ENCODE measurements at regions of chr2 and their contacts with region 1.

Region 1: GRCh38 chr2:64523666-64524603 is at the start of gene AFTPH:
- DNase-seq: peak; percentile 99
- H3K4me3 Mint-ChIP-seq: peak within 1 kb of the TSS; percentile 83
- H3K27ac Mint-ChIP-seq: peak within 1 kb of the TSS; percentile 94
- H3K4me1 Mint-ChIP-seq: peaks cover 8% of the 10 kb centered on the region
- H3K27me3 Mint-ChIP-seq: no peaks in the 10 kb centered on the region
- CTCF ChIP-seq: no peak
- total RNA-seq, gene AFTPH: 24.2 and 24.7 TPM in 2 replicates

Region 2: GRCh38 chr2:64318476-64318748 is 205.5 kb before region 1 on chr2:
- CTCF ChIA-PET with region 1: no interaction called
- POLR2A ChIA-PET with region 1: no interaction called
- intact Hi-C with region 1: no loop called
- DNase-seq: no peak
- H3K4me3 Mint-ChIP-seq: no peak overlapping the region
- H3K27ac Mint-ChIP-seq: no peak overlapping the region
- H3K4me1 Mint-ChIP-seq: no peaks in the 10 kb centered on the region
- H3K27me3 Mint-ChIP-seq: peaks cover 19% of the 10 kb centered on the region
- CTCF ChIP-seq: no peak

Region 3: DNA sequence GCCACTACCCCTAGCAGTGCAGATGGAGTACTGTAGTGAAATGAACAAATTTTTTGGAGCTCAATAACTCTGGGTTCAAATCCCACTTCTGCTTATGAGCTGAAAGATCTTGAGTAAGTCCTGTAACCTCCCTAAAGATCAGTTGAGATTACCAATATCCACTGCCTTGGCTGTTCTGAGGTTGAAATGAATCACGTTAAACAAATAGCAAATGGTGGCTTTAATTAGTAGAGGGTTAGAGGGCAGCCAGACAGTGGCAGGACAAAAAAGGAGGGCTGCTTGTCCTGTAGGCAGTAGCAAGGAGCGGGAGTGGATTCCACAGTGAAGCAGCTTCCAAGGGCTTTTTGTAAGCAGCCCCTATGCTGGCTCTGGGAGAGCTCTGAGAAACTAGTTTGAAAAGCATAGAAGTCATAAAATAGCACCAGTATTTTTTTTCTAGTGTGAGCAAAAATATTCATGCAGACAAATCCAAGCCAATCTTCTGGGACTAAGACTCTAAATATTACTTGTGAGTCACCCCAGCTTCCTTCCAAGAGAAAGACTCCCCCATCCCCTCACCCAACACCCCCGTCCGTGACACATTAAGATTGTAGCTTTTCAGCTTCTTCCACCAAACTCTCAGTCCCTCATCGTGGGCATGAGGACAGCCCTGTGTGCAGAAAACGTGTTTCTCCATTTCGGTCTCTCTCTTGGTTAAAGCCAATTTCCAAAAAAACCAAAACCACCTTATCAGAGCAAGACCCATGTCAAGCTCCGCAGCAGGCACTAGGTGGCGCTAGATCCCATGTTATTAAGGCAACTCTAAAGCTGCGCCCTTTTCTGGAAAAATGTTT is 193.4 kb before region 1 on chr2:
- CTCF ChIA-PET with region 1: interaction called, 17 read pairs
- POLR2A ChIA-PET with region 1: interaction called, 15 read pairs
- intact Hi-C with region 1: no loop called
- DNase-seq: peak; percentile 81
- H3K4me3 Mint-ChIP-seq: peak overlapping the region; percentile 49
- H3K27ac Mint-ChIP-seq: peak overlapping the region; percentile 64
- H3K4me1 Mint-ChIP-seq: peaks cover 6% of the 10 kb centered on the region
- H3K27me3 Mint-ChIP-seq: no peaks in the 10 kb centered on the region
- CTCF ChIP-seq: peak; percentile 94

Region 4: GRCh38 chr2:64504774-64505720 is 18.9 kb before region 1 on chr2:
- CTCF ChIA-PET with region 1: interaction called, 15 read pairs
- POLR2A ChIA-PET with region 1: interaction called, 5 read pairs
- intact Hi-C with region 1: no loop called
- DNase-seq: no peak
- H3K4me3 Mint-ChIP-seq: no peak overlapping the region
- H3K27ac Mint-ChIP-seq: no peak overlapping the region
- H3K4me1 Mint-ChIP-seq: peaks cover 9% of the 10 kb centered on the region
- H3K27me3 Mint-ChIP-seq: no peaks in the 10 kb centered on the region
- CTCF ChIP-seq: no peak

Region 5: DNA sequence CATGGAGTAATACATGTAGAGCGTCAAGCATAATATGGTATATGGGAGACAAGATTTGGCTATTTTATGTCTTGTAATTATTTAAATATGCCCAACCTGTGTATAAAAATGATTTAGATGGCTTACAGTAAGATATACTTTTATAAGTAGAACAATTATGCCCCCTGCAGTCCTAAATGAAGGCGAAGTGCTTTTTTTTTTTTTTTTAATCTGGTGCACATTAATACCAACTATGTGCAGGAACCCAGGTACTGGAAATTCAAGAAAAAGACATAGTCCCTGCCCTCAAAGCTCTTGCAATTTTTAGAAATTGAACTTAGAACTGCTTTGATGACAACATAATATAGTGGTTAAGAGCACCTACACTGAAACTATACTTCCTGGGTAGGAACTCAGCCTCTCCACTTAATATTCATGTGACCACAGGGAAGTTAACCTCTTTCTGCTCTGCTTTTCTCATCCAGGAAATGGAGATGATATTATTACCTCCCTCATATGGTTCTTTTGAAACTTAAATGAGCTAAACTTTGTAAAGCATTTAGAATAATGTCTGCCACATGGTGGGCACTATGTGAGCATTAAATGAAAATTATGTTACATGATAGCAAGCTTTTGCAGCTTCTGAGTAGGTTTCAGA is 38.3 kb after region 1 on chr2:
- CTCF ChIA-PET with region 1: interaction called, 20 read pairs
- POLR2A ChIA-PET with region 1: interaction called, 15 read pairs
- intact Hi-C with region 1: loop called (anchors 1 kb)
- DNase-seq: peak; percentile 34
- H3K4me3 Mint-ChIP-seq: no peak overlapping the region
- H3K27ac Mint-ChIP-seq: no peak overlapping the region
- H3K4me1 Mint-ChIP-seq: peaks cover 9% of the 10 kb centered on the region
- H3K27me3 Mint-ChIP-seq: no peaks in the 10 kb centered on the region
- CTCF ChIP-seq: peak; percentile 27

Region 6: GRCh38 chr2:64653349-64654062 is 129.6 kb after region 1 on chr2 and contains the start of gene SERTAD2:
- CTCF ChIA-PET with region 1: interaction called, 3 read pairs
- POLR2A ChIA-PET with region 1: interaction called, 60 read pairs
- intact Hi-C with region 1: loop called (anchors 2 kb)
- DNase-seq: peak; percentile 86
- H3K4me3 Mint-ChIP-seq: peak within 1 kb of the TSS; percentile 77
- H3K27ac Mint-ChIP-seq: peak within 1 kb of the TSS; percentile 89
- H3K4me1 Mint-ChIP-seq: peaks cover 22% of the 10 kb centered on the region
- H3K27me3 Mint-ChIP-seq: no peaks in the 10 kb centered on the region
- CTCF ChIP-seq: no peak
- total RNA-seq, gene SERTAD2: 15.0 and 21.6 TPM in 2 replicates

Region 7: GRCh38 chr2:64873472-64873924 is 349.6 kb after region 1 on chr2:
- CTCF ChIA-PET with region 1: interaction called, 6 read pairs
- POLR2A ChIA-PET with region 1: interaction called, 10 read pairs
- intact Hi-C with region 1: no loop called
- DNase-seq: peak; percentile 74
- H3K4me3 Mint-ChIP-seq: no peak overlapping the region
- H3K27ac Mint-ChIP-seq: no peak overlapping the region
- H3K4me1 Mint-ChIP-seq: peaks cover 15% of the 10 kb centered on the region
- H3K27me3 Mint-ChIP-seq: no peaks in the 10 kb centered on the region
- CTCF ChIP-seq: peak; percentile 93

Measured in MCF 10A (cell line).